ENCODE measurements at regions of chr13 and their contacts with region 1.

Region 1: GRCh38 chr13:114281351-114282040 is at the start of gene UPF3A:
- DNase-seq: peak; percentile 97
- ATAC-seq: peak; percentile 77
- H3K4me3 ChIP-seq: peak within 1 kb of the TSS; percentile 65 to 86 (median 75)
- H3K4me3 Mint-ChIP-seq: peak within 1 kb of the TSS; percentile 89
- H3K27ac ChIP-seq: peak within 1 kb of the TSS; percentile 83 to 90
- H3K27ac Mint-ChIP-seq: peak within 1 kb of the TSS; percentile 95
- H3K4me1 ChIP-seq: peaks cover 23 to 30% of the 10 kb centered on the region in 2 donors
- H3K4me1 Mint-ChIP-seq: peaks cover 34% of the 10 kb centered on the region
- H3K27me3 ChIP-seq: no peaks in the 10 kb centered on the region
- H3K27me3 Mint-ChIP-seq: no peaks in the 10 kb centered on the region
- CTCF ChIP-seq: no peak
- total RNA-seq, gene UPF3A: 106 and 109 TPM in 2 replicates

Region 2: GRCh38 chr13:114263578-114263977 is 17.9 kb before region 1 on chr13:
- CTCF ChIA-PET with region 1: interaction called, 5 read pairs
- POLR2A ChIA-PET with region 1: no interaction called
- intact Hi-C with region 1: loop called (anchors 2 kb)
- DNase-seq: peak; percentile 41
- ATAC-seq: peak; percentile 28
- H3K4me3 ChIP-seq: peak overlapping the region in 1 of 5 experiments; percentile 33
- H3K4me3 Mint-ChIP-seq: peak overlapping the region; percentile 73
- H3K27ac ChIP-seq: peak overlapping the region; percentile 29 to 71
- H3K27ac Mint-ChIP-seq: peak overlapping the region; percentile 78
- H3K4me1 ChIP-seq: peaks cover 49 to 56% of the 10 kb centered on the region in 2 donors
- H3K4me1 Mint-ChIP-seq: peaks cover 52% of the 10 kb centered on the region
- H3K27me3 ChIP-seq: no peaks in the 10 kb centered on the region
- H3K27me3 Mint-ChIP-seq: no peaks in the 10 kb centered on the region
- CTCF ChIP-seq: no peak

Region 3: GRCh38 chr13:114314074-114314912 is 32.8 kb after region 1 on chr13 and contains the start of gene CHAMP1:
- CTCF ChIA-PET with region 1: interaction called, 3 read pairs
- POLR2A ChIA-PET with region 1: interaction called, 10 read pairs
- intact Hi-C with region 1: loop called (anchors 1 kb)
- DNase-seq: peak; percentile 92
- ATAC-seq: peak; percentile 85
- H3K4me3 ChIP-seq: peak within 1 kb of the TSS; percentile 43 to 86 (median 67)
- H3K4me3 Mint-ChIP-seq: peak within 1 kb of the TSS; percentile 90
- H3K27ac ChIP-seq: peak within 1 kb of the TSS; percentile 80 to 88
- H3K27ac Mint-ChIP-seq: peak within 1 kb of the TSS; percentile 92
- H3K4me1 ChIP-seq: peaks cover 27 to 30% of the 10 kb centered on the region in 2 donors
- H3K4me1 Mint-ChIP-seq: peaks cover 48% of the 10 kb centered on the region
- H3K27me3 ChIP-seq: no peaks in the 10 kb centered on the region
- H3K27me3 Mint-ChIP-seq: no peaks in the 10 kb centered on the region
- CTCF ChIP-seq: no peak
- total RNA-seq, gene CHAMP1: 32.6 and 34.7 TPM in 2 replicates

Measured in B cell (primary cell).